Activated CD4-positive, alpha-beta memory T cell treated with anti-CD3 and anti-CD28 coated beads for 36 hours (primary cell): ENCODE measurements at regions of chr7 and their contacts with region 1.

Region 1: DNA sequence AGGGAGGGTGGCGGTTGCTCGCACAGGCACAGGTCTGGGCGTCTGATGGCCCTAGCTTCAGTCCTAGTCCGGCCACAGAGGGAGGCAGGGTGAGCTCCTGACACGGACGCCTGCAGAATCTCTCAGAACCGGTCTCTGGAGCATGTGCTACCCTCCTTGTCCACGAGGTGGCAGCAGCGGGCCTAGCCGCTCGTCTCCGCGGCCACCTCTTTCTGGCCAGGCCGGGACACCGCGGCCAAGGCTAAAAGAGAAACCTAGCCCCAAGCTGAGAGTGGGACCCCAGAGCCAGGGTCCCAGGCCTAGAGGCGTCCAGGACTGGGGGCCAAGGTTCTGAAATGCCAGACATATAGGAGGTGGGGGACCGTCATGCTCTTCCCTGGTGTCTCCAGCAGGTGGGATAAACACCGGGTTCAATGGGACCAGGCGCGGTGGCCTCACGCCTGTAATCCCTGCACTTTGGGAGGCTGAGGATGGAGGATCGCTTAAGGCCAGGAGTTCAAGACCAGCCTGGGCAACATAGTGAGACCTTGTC is 3.2 kb upstream of the LAT2 start:
- DNase-seq: peak; percentile 85
- H3K4me3 Mint-ChIP-seq: peak overlapping the region; percentile 20
- H3K27ac Mint-ChIP-seq: no peak overlapping the region
- H3K4me1 Mint-ChIP-seq: peaks cover 6% of the 10 kb centered on the region
- H3K27me3 Mint-ChIP-seq: no peaks in the 10 kb centered on the region

Region 2: DNA sequence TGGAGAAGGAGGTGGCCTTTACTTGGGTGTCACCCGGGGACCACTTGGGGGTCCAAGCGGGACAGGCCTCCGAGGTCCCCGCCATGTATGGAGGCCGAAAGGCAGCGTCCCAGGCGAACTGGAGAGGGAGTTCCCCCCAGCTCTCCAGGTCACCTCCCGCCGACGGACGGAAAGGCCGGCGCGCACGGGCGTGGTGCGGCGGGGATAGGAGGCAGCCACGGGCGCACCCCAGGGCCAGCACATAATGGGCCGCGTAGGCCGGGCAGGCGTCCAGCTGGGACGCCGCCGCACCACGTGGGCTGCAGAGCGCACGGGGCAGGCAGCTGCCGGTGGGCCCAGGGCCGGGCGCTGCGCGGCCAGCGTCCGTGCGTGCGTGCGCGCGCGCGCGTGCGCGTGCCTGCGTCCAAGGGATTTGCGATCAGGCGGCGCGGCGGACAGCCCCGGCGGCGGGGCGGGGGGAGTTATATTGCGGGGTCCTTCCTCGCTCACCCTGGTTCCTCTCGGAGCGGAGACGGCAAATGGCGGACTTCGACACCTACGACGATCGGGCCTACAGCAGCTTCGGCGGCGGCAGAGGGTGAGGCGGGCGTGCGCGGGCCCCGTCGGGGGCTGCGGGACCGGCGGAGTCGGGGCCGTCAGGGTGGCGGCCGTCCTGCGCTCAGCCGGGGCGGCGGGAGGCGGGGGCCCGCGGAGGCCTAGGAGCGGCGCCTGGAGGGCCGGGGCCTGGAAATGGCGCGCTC is 32.6 kb before region 1 on chr7 and contains the start of gene EIF4H:
- CTCF ChIA-PET with region 1: interaction called, 15 read pairs
- POLR2A ChIA-PET with region 1: interaction called, 4 read pairs
- intact Hi-C with region 1: no loop called
- DNase-seq: peak; percentile 96
- H3K4me3 Mint-ChIP-seq: peak within 1 kb of the TSS; percentile 88
- H3K27ac Mint-ChIP-seq: peak within 1 kb of the TSS; percentile 89
- H3K4me1 Mint-ChIP-seq: peaks cover 39% of the 10 kb centered on the region
- H3K27me3 Mint-ChIP-seq: no peaks in the 10 kb centered on the region
- total RNA-seq, gene EIF4H: 400 to 410 TPM

Region 3: DNA sequence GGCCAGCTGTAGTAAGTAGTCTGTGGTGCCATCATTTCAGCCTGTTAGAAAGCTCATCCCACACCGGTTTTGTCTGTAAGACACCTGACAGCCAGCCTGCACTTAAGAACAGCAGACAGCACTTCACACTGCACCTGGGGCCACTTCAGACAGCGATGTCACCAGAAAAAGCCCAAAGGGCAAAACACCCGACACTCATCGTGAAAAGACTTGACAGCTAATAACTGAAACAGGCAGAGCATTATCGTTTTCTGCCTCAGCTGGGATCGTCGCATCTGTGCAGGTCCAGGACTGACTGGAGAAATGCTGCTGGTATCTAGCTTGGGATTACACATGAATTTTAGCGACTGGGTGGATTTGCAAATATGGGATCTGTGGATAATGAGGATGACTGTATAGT is 13.6 kb before region 1 on chr7:
- CTCF ChIA-PET with region 1: interaction called, 13 read pairs
- POLR2A ChIA-PET with region 1: interaction called, 3 read pairs
- intact Hi-C with region 1: no loop called
- DNase-seq: no peak
- H3K4me3 Mint-ChIP-seq: no peak overlapping the region
- H3K27ac Mint-ChIP-seq: no peak overlapping the region
- H3K4me1 Mint-ChIP-seq: peaks cover 1% of the 10 kb centered on the region
- H3K27me3 Mint-ChIP-seq: no peaks in the 10 kb centered on the region

Region 4: GRCh38 chr7:74254129-74254857 is 47.6 kb after region 1 on chr7 and contains the start of gene RFC2:
- CTCF ChIA-PET with region 1: interaction called, 4 read pairs
- POLR2A ChIA-PET with region 1: no interaction called
- intact Hi-C with region 1: loop called (anchors 1 kb)
- DNase-seq: peak; percentile 98
- H3K4me3 Mint-ChIP-seq: peak within 1 kb of the TSS; percentile 98
- H3K27ac Mint-ChIP-seq: peak within 1 kb of the TSS; percentile 94
- H3K4me1 Mint-ChIP-seq: peaks cover 18% of the 10 kb centered on the region
- H3K27me3 Mint-ChIP-seq: no peaks in the 10 kb centered on the region
- total RNA-seq, gene RFC2: 80.8 to 81.1 TPM